CD8-positive, alpha-beta T cell (primary cell): ENCODE measurements at regions of chr9 and their contacts with region 1.

Region 1: GRCh38 chr9:128117613-128118471 is 9.7 kb downstream of the PTGES2 start:
- DNase-seq: peak; percentile 93 to 100 (median 96)
- ATAC-seq: peak; percentile 96
- H3K4me3 ChIP-seq: no peak overlapping the region
- H3K4me3 Mint-ChIP-seq: no peak overlapping the region
- H3K27ac ChIP-seq: no peak overlapping the region
- H3K27ac Mint-ChIP-seq: no peak overlapping the region
- H3K4me1 ChIP-seq: peaks cover 6% of the 10 kb centered on the region
- H3K4me1 Mint-ChIP-seq: peaks cover 5% of the 10 kb centered on the region
- H3K27me3 ChIP-seq: no peaks in the 10 kb centered on the region
- H3K27me3 Mint-ChIP-seq: no peaks in the 10 kb centered on the region
- CTCF ChIP-seq: peak; percentile 100

Region 2: DNA sequence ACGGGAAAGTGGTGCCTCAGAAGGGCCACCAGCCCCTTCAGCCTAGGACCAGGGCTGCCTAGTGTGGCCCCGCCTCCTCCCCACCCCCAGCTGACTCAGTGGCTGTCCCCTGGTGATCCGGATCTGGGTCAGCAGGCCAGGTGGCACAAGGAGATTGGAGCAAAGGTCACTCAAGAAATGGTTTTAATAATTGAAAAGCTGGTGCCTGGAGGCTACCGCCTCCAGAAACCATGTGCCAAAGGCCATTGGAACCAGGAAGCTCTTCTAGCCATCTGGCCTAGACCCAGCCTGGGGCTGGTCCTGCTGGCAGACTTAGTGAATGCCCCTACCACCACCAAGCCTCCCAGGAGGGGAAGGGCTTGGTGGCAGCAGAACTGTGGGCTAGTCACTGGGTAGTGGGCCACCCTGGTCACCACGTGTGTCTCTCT is 202.5 kb before region 1 on chr9:
- CTCF ChIA-PET with region 1: no interaction called
- POLR2A ChIA-PET with region 1: no interaction called
- intact Hi-C with region 1: no loop called
- DNase-seq: peak in 1 of 9 experiments; percentile 19
- ATAC-seq: no peak
- H3K4me3 ChIP-seq: peak overlapping the region; percentile 70 to 89
- H3K4me3 Mint-ChIP-seq: peak overlapping the region; percentile 89
- H3K27ac ChIP-seq: peak overlapping the region; percentile 50 to 62
- H3K27ac Mint-ChIP-seq: peak overlapping the region; percentile 92
- H3K4me1 ChIP-seq: peaks cover 36% of the 10 kb centered on the region
- H3K4me1 Mint-ChIP-seq: peaks cover 58% of the 10 kb centered on the region
- H3K27me3 ChIP-seq: no peaks in the 10 kb centered on the region
- H3K27me3 Mint-ChIP-seq: no peaks in the 10 kb centered on the region
- CTCF ChIP-seq: no peak

Region 3: GRCh38 chr9:127943731-127944144 is 174.1 kb before region 1 on chr9:
- CTCF ChIA-PET with region 1: interaction called, 11 read pairs
- POLR2A ChIA-PET with region 1: no interaction called
- intact Hi-C with region 1: loop called (anchors 1 to 5 kb)
- DNase-seq: peak; percentile 49 to 87 (median 78)
- ATAC-seq: peak; percentile 85
- H3K4me3 ChIP-seq: no peak overlapping the region
- H3K4me3 Mint-ChIP-seq: no peak overlapping the region
- H3K27ac ChIP-seq: no peak overlapping the region
- H3K27ac Mint-ChIP-seq: peak overlapping the region; percentile 89
- H3K4me1 ChIP-seq: peaks cover 39% of the 10 kb centered on the region
- H3K4me1 Mint-ChIP-seq: peaks cover 35% of the 10 kb centered on the region
- H3K27me3 ChIP-seq: no peaks in the 10 kb centered on the region
- H3K27me3 Mint-ChIP-seq: no peaks in the 10 kb centered on the region
- CTCF ChIP-seq: peak; percentile 83

Region 4: DNA sequence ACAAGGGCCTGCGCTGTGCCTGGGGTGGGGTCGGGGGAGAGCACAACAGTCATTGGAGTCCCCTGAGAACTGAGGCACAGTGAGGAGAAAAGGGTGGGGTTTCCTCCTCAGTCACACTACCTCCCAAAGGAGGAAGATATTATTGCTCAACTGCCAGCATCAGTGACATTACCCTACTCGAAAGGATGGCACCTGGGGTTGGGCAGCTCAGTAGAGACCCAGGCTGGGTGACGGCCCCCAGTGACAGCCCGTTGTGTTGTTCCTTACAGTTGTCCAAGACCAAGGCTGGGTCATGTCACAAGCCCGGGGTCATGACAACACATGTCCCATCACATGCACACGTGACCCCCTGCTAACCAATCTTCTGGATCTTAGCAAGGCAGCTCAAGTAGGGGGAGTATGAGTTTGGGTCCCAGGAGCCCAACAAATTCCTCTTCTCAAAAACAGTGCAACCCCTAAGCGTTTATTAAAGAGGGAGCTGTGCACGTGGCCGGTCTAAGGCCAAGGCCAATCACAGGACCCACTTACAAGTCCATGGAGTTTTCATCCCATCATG is 54.9 kb before region 1 on chr9:
- CTCF ChIA-PET with region 1: interaction called, 44 read pairs
- POLR2A ChIA-PET with region 1: no interaction called
- intact Hi-C with region 1: no loop called
- DNase-seq: no peak
- ATAC-seq: no peak
- H3K4me3 ChIP-seq: no peak overlapping the region
- H3K4me3 Mint-ChIP-seq: no peak overlapping the region
- H3K27ac ChIP-seq: no peak overlapping the region
- H3K27ac Mint-ChIP-seq: no peak overlapping the region
- H3K4me1 ChIP-seq: peaks cover 60% of the 10 kb centered on the region
- H3K4me1 Mint-ChIP-seq: peaks cover 54% of the 10 kb centered on the region
- H3K27me3 ChIP-seq: no peaks in the 10 kb centered on the region
- H3K27me3 Mint-ChIP-seq: no peaks in the 10 kb centered on the region
- CTCF ChIP-seq: no peak

Region 5: GRCh38 chr9:128088253-128088945 is 29.4 kb before region 1 on chr9:
- CTCF ChIA-PET with region 1: interaction called, 64 read pairs
- POLR2A ChIA-PET with region 1: interaction called, 5 read pairs
- intact Hi-C with region 1: no loop called
- DNase-seq: peak in 1 of 9 experiments; percentile 49
- ATAC-seq: peak; percentile 26
- H3K4me3 ChIP-seq: no peak overlapping the region
- H3K4me3 Mint-ChIP-seq: peak overlapping the region; percentile 24
- H3K27ac ChIP-seq: peak overlapping the region in 1 of 2 experiments; percentile 8
- H3K27ac Mint-ChIP-seq: peak overlapping the region; percentile 57
- H3K4me1 ChIP-seq: peaks cover 57% of the 10 kb centered on the region
- H3K4me1 Mint-ChIP-seq: peaks cover 62% of the 10 kb centered on the region
- H3K27me3 ChIP-seq: no peaks in the 10 kb centered on the region
- H3K27me3 Mint-ChIP-seq: no peaks in the 10 kb centered on the region
- CTCF ChIP-seq: no peak

Region 6: GRCh38 chr9:128103589-128103962 is 14.3 kb before region 1 on chr9:
- CTCF ChIA-PET with region 1: interaction called, 80 read pairs
- POLR2A ChIA-PET with region 1: interaction called, 3 read pairs
- intact Hi-C with region 1: no loop called
- DNase-seq: peak in 7 of 9 experiments; percentile 16 to 70 (median 51)
- ATAC-seq: peak; percentile 63
- H3K4me3 ChIP-seq: no peak overlapping the region
- H3K4me3 Mint-ChIP-seq: no peak overlapping the region
- H3K27ac ChIP-seq: peak overlapping the region in 1 of 2 experiments; percentile 6
- H3K27ac Mint-ChIP-seq: peak overlapping the region; percentile 67
- H3K4me1 ChIP-seq: peaks cover 68% of the 10 kb centered on the region
- H3K4me1 Mint-ChIP-seq: peaks cover 55% of the 10 kb centered on the region
- H3K27me3 ChIP-seq: no peaks in the 10 kb centered on the region
- H3K27me3 Mint-ChIP-seq: no peaks in the 10 kb centered on the region
- CTCF ChIP-seq: peak; percentile 29

Region 7: GRCh38 chr9:128159784-128160602 is 42.2 kb after region 1 on chr9 and contains the start of gene BBLN:
- CTCF ChIA-PET with region 1: interaction called, 13 read pairs
- POLR2A ChIA-PET with region 1: interaction called, 4 read pairs
- intact Hi-C with region 1: no loop called
- DNase-seq: peak; percentile 87 to 95 (median 93)
- ATAC-seq: peak; percentile 87
- H3K4me3 ChIP-seq: peak within 1 kb of the TSS; percentile 90 to 94
- H3K4me3 Mint-ChIP-seq: peak within 1 kb of the TSS; percentile 79
- H3K27ac ChIP-seq: peak within 1 kb of the TSS; percentile 70 to 86
- H3K27ac Mint-ChIP-seq: peak within 1 kb of the TSS; percentile 90
- H3K4me1 ChIP-seq: peaks cover 19% of the 10 kb centered on the region
- H3K4me1 Mint-ChIP-seq: peaks cover 17% of the 10 kb centered on the region
- H3K27me3 ChIP-seq: no peaks in the 10 kb centered on the region
- H3K27me3 Mint-ChIP-seq: no peaks in the 10 kb centered on the region
- CTCF ChIP-seq: no peak
- total RNA-seq, gene BBLN: 56.6 to 67.4 TPM